Ascending aorta (tissue), 2 donors: ENCODE measurements at regions of chr3 and their contacts with region 1.

Region 1: DNA sequence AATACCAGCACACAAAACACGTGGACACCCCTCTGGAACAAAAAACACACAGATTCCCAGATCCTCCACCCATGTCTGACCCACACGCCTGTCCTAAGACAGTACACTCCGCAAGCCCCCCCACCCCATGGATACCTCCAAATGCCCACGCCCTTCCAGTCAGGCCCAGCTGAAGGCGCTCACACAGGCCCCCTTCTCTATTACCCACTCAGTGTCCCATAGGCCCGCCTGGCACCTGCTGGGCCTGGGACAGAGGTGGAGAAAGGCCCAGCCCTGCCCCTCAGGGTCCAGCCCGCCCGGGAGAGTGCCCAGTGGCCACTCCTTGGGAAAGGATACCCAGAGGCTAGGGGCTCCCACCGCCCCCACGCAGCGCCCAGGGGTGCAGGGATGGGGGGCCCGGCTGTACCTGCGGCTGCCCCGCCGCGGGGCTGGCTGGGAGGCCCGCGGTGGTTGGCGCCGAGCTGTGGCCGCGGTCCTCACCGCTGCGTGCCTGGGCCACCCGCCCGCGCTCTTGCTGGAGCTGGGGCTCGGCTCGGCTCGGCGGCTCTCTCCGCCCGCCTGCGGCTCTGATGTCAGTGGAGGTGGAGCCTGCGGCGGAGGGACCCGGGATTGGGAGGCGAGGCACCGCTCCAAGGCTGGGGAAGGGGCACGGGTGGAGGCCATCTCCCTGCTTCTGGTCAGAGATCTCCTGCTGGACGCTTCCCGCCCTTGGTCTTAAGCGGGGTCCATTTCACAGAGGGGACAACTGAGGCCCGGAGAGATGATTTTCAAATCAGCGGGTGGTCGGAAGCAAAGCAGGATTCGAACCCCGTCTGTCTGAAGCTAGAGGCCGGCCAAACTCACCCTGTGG is at the start of gene CAMK1:
- DNase-seq: peak; percentile 43 to 91
- H3K4me3 ChIP-seq: peak within 1 kb of the TSS; percentile 73 to 92
- H3K27ac ChIP-seq: peak within 1 kb of the TSS; percentile 81 to 88
- H3K4me1 ChIP-seq: peaks cover 0 to 25% of the 10 kb centered on the region in 2 donors
- H3K27me3 ChIP-seq: no peaks in the 10 kb centered on the region
- CTCF ChIP-seq: no peak
- total RNA-seq, gene CAMK1: 82.9 TPM

Region 2: GRCh38 chr3:9749645-9750555 is 19.8 kb before region 1 on chr3 and contains the start of gene OGG1:
- intact Hi-C with region 1: loop called (anchors 1 kb)
- DNase-seq: peak; percentile 92 to 99
- H3K4me3 ChIP-seq: peak within 1 kb of the TSS; percentile 67 to 70
- H3K27ac ChIP-seq: peak within 1 kb of the TSS; percentile 76 to 84
- H3K4me1 ChIP-seq: peaks cover 4 to 14% of the 10 kb centered on the region in 2 donors
- H3K27me3 ChIP-seq: no peaks in the 10 kb centered on the region
- CTCF ChIP-seq: no peak
- total RNA-seq, gene OGG1: 36.0 TPM